ENCODE measurements at regions of chr17 and their contacts with region 1.

Region 1: DNA sequence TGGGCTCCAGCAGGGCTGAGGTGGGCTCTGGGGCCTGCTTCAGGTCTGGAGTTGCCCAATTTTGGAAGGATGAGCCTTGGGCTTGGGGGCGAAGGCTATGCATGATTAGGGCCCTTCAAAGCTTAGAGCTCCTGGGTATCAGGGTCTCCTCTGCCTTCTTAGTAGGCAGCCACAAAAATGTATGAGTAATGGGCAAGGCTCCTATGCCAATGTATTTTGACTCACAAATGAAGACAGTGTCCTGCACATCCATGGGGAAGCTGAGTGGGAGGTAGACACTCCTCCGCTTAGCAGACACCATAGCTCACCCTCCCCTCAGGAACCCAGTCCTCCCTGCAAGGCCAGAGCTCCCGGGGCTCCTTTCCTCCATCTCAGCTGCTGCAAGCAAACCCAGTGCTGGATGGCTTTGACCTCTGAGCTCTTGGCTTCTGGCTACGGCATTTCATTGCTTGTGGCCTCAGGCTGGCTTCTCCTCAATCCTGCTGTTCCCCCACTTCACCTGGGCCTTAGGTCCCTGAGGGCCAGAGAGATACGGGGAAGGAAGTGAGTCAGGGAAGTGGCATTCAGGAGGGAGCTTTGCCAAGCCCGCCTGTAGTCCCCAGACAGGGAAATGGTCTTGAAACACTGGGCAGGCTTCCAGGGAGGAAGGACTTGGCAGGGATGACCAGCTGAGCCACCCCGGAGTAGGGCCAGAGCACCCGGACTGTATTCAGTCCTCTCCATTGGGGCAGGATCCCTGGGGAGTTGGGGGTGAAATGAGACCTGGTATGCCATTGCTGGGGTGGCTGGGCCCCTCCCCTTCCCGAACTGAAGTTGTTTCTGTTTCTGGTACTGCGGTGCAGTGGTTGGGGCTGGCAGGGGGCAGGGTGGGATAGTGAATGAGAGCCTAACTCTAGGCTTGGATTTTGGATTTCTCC is 4.4 kb downstream of the ABCC3 start:
- DNase-seq: peak; percentile 96 to 100
- ATAC-seq: peak; percentile 77 to 80
- H3K4me3 ChIP-seq: peak overlapping the region; percentile 92; the same call in 1 of the 3 replicates
- H3K27ac ChIP-seq: peak overlapping the region; percentile 99 to 100
- H3K4me1 ChIP-seq: peaks cover 78% of the 10 kb centered on the region
- CTCF ChIP-seq: no peak
- EP300 ChIP-seq: peak; percentile 85 to 95
- POLR2A ChIP-seq: no peak; the same call in 1 of the 2 replicates
- RAD21 ChIP-seq: peak; percentile 32 to 55

Region 2: DNA sequence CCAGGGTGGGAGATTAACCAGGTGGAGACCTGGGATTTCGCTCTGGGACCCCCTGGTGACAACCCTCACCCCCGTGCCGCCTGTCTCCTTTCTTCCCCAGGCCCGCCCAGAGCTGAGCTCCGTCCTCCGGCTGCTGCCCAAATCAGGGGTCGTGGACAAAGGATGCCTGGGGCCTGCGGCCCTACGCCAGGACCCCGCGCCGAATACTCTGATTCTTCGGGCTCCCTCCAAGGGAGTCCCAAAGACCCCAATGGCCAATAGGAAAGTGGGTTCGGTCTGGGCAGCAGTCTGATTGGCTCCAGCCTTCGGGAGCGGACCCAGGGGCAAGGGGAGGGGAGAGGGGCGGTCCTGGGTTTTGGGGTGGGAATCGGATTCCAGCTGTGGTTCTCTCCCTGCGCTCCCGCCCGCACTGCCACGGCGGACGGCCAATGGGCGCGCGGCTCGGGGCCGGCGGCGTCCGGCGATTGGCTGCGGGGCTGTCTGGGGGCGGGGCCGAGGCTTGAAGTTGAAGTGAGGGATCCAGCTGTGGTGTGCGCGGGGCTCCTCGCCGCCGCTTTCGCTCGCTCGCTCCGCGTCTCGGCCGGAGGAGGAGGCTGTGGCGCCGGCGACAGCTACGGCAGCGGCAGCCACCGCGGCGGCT is 78.8 kb before region 1 on chr17 and contains the start of gene CACNA1G:
- CTCF ChIA-PET with region 1: interaction called, 5 read pairs
- POLR2A ChIA-PET with region 1: interaction called, 42 read pairs
- DNase-seq: peak; percentile 93 to 99
- ATAC-seq: peak; percentile 77 to 90
- H3K4me3 ChIP-seq: peak within 1 kb of the TSS; percentile 69
- H3K27ac ChIP-seq: peak within 1 kb of the TSS; percentile 75 to 88
- H3K4me1 ChIP-seq: peaks cover 37% of the 10 kb centered on the region
- CTCF ChIP-seq: no peak
- EP300 ChIP-seq: no peak
- POLR2A ChIP-seq: peak; percentile 49
- RAD21 ChIP-seq: no peak
- polyA plus RNA-seq, gene CACNA1G: 4.0 and 4.9 TPM in 2 replicates

Region 3: GRCh38 chr17:50661795-50662391 is 22.8 kb after region 1 on chr17:
- CTCF ChIA-PET with region 1: interaction called, 2,097 read pairs
- POLR2A ChIA-PET with region 1: interaction called, 237 read pairs
- DNase-seq: peak; percentile 100
- ATAC-seq: peak; percentile 61 to 75
- H3K4me3 ChIP-seq: 0 out of 3 replicates have a peak overlapping the region, but pooled peaks have one; percentile 8
- H3K27ac ChIP-seq: peak overlapping the region; percentile 98
- H3K4me1 ChIP-seq: peaks cover 97% of the 10 kb centered on the region
- CTCF ChIP-seq: no peak
- EP300 ChIP-seq: peak; percentile 96 to 98
- POLR2A ChIP-seq: no peak
- RAD21 ChIP-seq: peak; percentile 21 to 65; a peak in 4 of 5 replicates

Region 4: GRCh38 chr17:50686494-50687199 is 47.5 kb after region 1 on chr17:
- CTCF ChIA-PET with region 1: interaction called, 2,097 read pairs
- POLR2A ChIA-PET with region 1: interaction called, 147 read pairs
- DNase-seq: peak; percentile 93 to 94
- ATAC-seq: peak; percentile 57 to 75
- H3K4me3 ChIP-seq: peak overlapping the region; percentile 11; the same call in 2 of the 3 replicates
- H3K27ac ChIP-seq: peak overlapping the region; percentile 97 to 98
- H3K4me1 ChIP-seq: peaks cover 100% of the 10 kb centered on the region
- CTCF ChIP-seq: no peak
- EP300 ChIP-seq: peak; percentile 69 to 86; a peak in 3 of 5 replicates
- POLR2A ChIP-seq: no peak
- RAD21 ChIP-seq: peak; percentile 42 to 57; a peak in 4 of 5 replicates

Measured in A549 (cell line).